PC-9 (cell line): ENCODE measurements at regions of chr9 and their contacts with region 1.

Region 1: GRCh38 chr9:81223986-81224763 is 465.2 kb downstream of the TLE1 start:
- DNase-seq: no peak
- H3K4me3 ChIP-seq: no peak overlapping the region
- H3K27ac ChIP-seq: no peak overlapping the region
- H3K4me1 ChIP-seq: no peaks in the 10 kb centered on the region
- H3K27me3 ChIP-seq: no peaks in the 10 kb centered on the region
- CTCF ChIP-seq: no peak

Region 2: DNA sequence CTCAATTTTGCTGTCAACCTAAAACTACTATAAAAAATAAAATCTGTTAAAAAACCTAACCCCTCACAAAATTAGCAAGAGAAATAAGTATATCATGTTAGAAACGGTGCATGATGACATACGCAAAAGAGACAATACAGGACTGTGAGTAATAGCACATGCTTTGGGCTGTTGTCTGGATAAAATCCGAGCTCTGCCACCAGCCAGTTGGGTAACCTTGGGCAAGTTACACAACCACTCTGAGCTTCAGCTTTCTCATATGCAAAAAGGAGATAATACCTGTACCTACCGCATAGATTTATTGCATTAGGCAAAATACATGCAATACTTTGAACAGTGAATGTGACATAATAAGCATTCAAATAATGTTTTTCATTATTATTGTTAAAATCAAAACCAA is 16.5 kb before region 1 on chr9:
- CTCF ChIA-PET with region 1: no interaction called
- POLR2A ChIA-PET with region 1: no interaction called
- intact Hi-C with region 1: no loop called
- DNase-seq: no peak
- H3K4me3 ChIP-seq: no peak overlapping the region
- H3K27ac ChIP-seq: no peak overlapping the region
- H3K4me1 ChIP-seq: no peaks in the 10 kb centered on the region
- H3K27me3 ChIP-seq: no peaks in the 10 kb centered on the region
- CTCF ChIP-seq: no peak

Region 3: DNA sequence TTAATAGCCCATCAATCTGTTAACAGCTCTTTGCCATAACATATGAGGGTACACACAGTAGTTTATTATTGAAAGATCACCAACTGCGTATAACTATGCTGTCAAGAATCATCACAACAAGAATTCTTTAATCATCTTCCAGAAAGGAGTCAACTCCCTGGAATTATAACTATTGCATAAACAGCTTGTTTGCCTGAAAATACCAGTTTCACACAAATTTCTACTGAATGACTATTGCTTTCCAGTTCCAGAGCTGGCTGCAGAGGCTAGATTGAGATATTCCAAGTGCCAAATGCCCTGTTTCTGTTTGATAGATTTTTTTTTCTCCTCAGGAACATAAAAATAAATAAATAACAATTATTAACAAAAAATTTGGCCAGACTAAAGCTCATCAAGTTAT is 20.5 kb after region 1 on chr9:
- CTCF ChIA-PET with region 1: no interaction called
- POLR2A ChIA-PET with region 1: interaction called, 11 read pairs
- intact Hi-C with region 1: no loop called
- DNase-seq: no peak
- H3K4me3 ChIP-seq: no peak overlapping the region
- H3K27ac ChIP-seq: no peak overlapping the region
- H3K4me1 ChIP-seq: no peaks in the 10 kb centered on the region
- H3K27me3 ChIP-seq: no peaks in the 10 kb centered on the region
- CTCF ChIP-seq: no peak

Region 4: DNA sequence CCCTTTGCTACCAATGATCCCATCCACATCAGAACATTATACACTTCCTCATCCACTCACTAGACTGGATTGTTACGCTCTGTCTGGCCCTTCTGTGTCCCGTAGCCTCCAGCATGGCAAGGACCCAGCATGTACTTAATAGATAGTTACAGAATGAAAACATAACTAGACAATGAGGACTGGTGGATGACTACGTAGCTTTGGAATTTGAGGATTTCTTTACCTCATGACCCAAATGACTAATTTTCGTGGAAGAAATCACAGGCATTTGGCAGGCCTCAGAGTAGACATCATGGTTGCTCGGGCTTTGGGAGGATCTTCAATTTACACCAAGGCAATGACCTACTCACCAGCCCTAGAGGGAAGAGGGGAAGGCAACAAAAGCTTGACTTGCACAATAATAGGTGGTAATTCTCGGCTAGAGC is 165.4 kb after region 1 on chr9:
- CTCF ChIA-PET with region 1: no interaction called
- POLR2A ChIA-PET with region 1: no interaction called
- intact Hi-C with region 1: no loop called
- DNase-seq: peak; percentile 78 to 96
- H3K4me3 ChIP-seq: no peak overlapping the region
- H3K27ac ChIP-seq: peak overlapping the region; percentile 66
- H3K4me1 ChIP-seq: peaks cover 40% of the 10 kb centered on the region
- H3K27me3 ChIP-seq: no peaks in the 10 kb centered on the region
- CTCF ChIP-seq: no peak